ENCODE measurements at regions of chr3 and their contacts with region 1.

Region 1: DNA sequence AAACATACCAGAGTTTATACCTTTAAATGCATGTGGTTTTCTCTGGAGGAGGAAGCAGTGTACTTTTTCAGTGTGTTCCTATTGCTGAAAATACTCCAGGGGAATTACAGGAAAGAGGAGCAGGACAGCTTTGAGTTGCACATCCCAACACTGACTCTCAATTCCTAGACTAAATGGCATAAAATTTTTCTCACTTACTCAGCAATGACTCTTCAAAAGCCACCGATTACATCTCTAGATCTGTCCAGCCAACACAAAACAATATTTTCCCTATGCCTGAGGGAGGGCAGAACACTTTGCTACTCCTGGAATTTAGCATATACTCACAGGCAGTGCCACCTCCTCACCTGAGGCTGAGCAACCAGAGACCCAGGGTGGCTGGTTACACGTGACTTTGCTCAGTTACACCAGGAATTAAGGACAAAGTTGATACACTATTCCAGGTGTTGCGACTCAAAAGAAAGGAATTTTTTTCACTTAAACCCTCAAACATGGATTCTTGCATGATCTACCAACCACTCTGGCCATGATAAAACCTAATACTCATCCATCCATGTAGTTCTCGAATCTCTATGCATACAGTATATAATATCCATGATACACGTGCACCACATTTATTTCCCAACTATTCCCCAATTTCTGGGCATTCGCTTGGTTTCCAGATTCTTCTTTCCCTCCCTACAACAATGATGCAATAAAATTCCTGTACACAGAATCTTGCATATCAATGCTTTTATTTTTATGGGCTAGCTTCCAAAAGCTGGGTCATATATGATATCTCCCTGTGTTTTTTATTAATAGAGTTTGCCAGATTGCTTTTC is 194.6 kb downstream of the THRB start:
- DNase-seq: peak; percentile 87
- ATAC-seq: peak; percentile 52
- H3K4me3 ChIP-seq: peak overlapping the region; percentile 12; the same call in 1 of the 2 replicates
- H3K27ac ChIP-seq: peak overlapping the region; percentile 59
- H3K4me1 ChIP-seq: peaks cover 61% of the 10 kb centered on the region
- H3K27me3 ChIP-seq: no peaks in the 10 kb centered on the region
- CTCF ChIP-seq: no peak

Region 2: GRCh38 chr3:23991683-23992628 is 308.1 kb before region 1 on chr3:
- CTCF ChIA-PET with region 1: no interaction called
- POLR2A ChIA-PET with region 1: no interaction called
- intact Hi-C with region 1: loop called (anchors 1 kb)
- DNase-seq: peak; percentile 14
- ATAC-seq: peak; percentile 71
- H3K4me3 ChIP-seq: no peak overlapping the region
- H3K27ac ChIP-seq: no peak overlapping the region
- H3K4me1 ChIP-seq: no peaks in the 10 kb centered on the region
- H3K27me3 ChIP-seq: no peaks in the 10 kb centered on the region
- CTCF ChIP-seq: no peak

Region 3: DNA sequence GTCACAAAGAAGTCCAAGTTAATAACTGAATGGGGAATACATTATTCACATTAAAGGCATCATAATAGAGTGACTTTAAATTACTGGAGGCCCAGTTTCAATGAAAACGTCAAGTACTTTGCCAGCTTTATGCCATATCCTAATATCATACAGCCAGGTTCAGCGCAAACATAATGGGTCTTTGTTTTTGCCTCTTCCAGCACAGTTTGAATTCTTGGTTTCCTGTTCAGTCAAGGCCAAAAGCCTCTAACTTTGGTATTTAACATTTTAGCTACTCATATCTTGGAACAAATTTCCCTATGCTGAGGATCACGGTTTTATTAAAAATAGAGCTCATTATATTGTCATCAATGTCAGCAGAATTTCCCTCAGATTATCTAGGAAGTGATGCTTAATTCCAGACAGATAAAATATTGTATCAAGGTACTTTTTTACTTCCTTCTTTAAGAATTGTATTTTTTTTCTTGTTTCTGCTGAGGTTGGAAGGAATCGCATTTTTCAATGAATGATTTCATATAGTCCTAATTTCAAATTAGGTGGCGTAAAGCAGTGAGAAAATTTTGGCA is 74.5 kb before region 1 on chr3:
- CTCF ChIA-PET with region 1: no interaction called
- POLR2A ChIA-PET with region 1: no interaction called
- intact Hi-C with region 1: no loop called
- DNase-seq: no peak
- ATAC-seq: no peak
- H3K4me3 ChIP-seq: no peak overlapping the region
- H3K27ac ChIP-seq: no peak overlapping the region
- H3K4me1 ChIP-seq: peaks cover 10% of the 10 kb centered on the region; the same call in 1 of the 2 replicates
- H3K27me3 ChIP-seq: no peaks in the 10 kb centered on the region
- CTCF ChIP-seq: no peak

Region 4: DNA sequence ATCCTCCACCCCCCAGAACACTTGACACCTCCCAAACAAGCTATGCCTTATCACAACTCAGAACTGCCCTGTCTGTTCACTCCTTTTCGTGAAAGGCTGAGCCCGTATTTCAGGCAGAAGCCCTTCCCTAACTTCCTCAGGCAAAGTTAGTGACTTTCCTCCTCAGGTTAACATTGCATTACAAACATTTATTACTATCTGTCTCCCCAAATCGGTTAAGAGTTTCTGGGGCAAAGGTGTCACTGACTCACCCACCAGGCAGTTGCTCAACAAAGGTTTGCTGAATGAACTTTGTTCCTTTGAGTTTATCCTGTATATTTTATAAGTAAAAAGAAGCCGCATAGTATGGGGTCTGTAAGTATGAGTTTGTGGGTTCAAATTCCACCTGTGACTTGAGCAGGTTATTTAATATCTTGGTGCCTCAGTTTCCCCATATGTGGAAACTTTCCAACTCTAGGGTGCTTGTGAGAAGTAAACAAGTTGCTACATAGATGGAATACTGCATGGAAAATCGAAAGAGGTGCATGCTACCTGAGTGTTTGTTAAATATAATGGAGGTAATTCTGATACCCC is 16.9 kb after region 1 on chr3:
- CTCF ChIA-PET with region 1: no interaction called
- POLR2A ChIA-PET with region 1: no interaction called
- intact Hi-C with region 1: loop called (anchors 1 kb)
- DNase-seq: peak; percentile 95
- ATAC-seq: peak; percentile 71
- H3K4me3 ChIP-seq: peak overlapping the region; percentile 32; the same call in 1 of the 2 replicates
- H3K27ac ChIP-seq: peak overlapping the region; percentile 78
- H3K4me1 ChIP-seq: peaks cover 38% of the 10 kb centered on the region
- H3K27me3 ChIP-seq: no peaks in the 10 kb centered on the region
- CTCF ChIP-seq: no peak